MCF 10A (cell line): ENCODE measurements at regions of chr1 and their contacts with region 1.

Region 1: DNA sequence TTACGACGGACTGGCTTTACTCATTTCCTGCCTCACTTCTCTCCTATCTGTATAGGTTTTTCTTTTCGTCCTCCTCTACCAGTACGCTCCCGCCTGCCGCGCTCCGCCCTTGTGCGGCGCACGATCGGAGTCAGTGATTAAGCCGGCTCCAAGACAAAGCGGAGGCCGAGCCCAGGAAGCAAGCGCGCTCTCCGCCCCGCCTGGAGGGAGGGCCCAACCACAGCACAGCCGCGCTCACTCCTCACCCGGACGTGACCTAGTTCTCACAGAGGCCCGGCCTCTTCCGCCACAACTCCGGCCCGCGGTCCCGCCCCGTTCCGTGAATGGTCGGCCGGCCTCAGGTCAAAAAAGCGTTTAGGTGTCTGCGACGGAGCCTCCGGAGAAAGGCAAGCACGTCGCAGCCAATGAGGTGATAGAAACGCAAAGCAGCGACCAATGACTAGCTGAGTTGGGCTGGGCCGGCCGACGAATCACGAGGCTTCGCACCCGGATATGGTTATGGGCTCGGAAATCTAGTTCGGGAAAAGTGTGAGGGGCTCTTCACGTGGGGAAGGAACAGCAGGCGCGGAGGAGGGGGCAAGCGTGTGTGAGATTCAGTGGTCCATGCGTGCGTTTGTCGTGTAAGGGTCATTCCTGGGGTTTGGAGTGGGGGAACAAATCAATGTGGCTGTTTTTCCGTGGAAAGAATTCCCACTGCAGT is at the start of gene METTL13:
- DNase-seq: peak; percentile 100
- H3K4me3 Mint-ChIP-seq: peak within 1 kb of the TSS; percentile 84
- H3K27ac Mint-ChIP-seq: peak within 1 kb of the TSS; percentile 95
- H3K4me1 Mint-ChIP-seq: peaks cover 28% of the 10 kb centered on the region
- H3K27me3 Mint-ChIP-seq: no peaks in the 10 kb centered on the region
- CTCF ChIP-seq: no peak
- total RNA-seq, gene METTL13: 30.7 and 39.1 TPM in 2 replicates

Region 2: DNA sequence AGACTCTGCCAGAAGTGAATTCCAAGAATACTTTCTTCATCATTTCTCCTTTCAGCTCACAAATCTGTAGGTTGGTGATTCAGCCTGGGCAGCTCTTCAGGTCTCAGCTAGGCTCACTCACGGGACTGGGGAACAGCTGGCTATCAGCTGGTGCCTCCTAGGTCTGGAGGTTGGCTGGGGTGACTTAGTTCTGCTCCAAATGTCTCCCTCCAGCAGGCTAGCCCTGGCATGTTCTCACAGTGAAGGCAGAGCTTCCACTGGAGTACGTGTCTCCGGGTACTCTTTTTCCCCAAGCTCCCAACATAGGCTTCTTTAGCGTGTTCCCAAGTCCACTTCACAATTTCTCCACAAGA is 27.0 kb before region 1 on chr1:
- CTCF ChIA-PET with region 1: interaction called, 4 read pairs
- POLR2A ChIA-PET with region 1: interaction called, 29 read pairs
- intact Hi-C with region 1: no loop called
- DNase-seq: peak; percentile 7
- H3K4me3 Mint-ChIP-seq: no peak overlapping the region
- H3K27ac Mint-ChIP-seq: peak overlapping the region; percentile 80
- H3K4me1 Mint-ChIP-seq: peaks cover 10% of the 10 kb centered on the region
- H3K27me3 Mint-ChIP-seq: no peaks in the 10 kb centered on the region
- CTCF ChIP-seq: no peak

Region 3: GRCh38 chr1:171769171-171769570 is 12.2 kb before region 1 on chr1:
- CTCF ChIA-PET with region 1: interaction called, 4 read pairs
- POLR2A ChIA-PET with region 1: interaction called, 31 read pairs
- intact Hi-C with region 1: no loop called
- DNase-seq: no peak
- H3K4me3 Mint-ChIP-seq: no peak overlapping the region
- H3K27ac Mint-ChIP-seq: no peak overlapping the region
- H3K4me1 Mint-ChIP-seq: no peaks in the 10 kb centered on the region
- H3K27me3 Mint-ChIP-seq: peaks cover 17% of the 10 kb centered on the region
- CTCF ChIP-seq: no peak

Region 4: DNA sequence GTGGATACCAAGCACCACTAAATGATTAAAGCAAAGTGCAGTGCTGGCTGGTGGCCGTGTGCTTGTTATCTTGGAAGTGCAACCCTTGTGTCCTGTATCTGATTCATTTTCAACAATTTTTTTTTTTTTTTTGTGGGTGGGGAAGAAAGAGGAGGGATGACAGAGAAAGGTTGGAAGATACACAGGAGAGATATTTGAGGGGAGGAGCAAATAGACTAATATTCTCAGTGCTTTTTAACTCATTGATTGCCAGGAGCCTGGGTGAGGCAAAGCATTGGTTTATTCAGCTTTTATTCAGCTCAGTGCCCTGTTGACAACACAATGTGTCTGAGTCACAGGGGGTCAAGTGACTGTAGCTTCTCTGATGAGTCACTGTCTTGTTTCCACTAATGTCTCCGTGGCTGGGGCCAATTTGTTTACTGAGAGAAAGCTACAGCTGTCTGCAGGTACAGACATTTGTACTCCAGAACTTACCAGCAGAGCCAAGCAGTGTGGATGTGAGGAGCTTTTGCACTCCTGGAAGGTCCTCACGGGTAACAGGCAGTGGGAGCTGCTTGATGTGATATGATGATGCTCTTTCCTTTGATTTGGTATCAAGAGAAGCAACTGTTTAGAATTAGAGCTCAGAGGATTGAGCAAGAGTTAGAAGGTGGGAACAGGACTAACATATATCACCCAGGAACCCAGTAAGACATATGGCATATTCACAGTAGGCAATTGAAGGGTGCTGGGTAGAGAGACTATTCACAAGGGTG is 36.4 kb after region 1 on chr1:
- CTCF ChIA-PET with region 1: no interaction called
- POLR2A ChIA-PET with region 1: interaction called, 10 read pairs
- intact Hi-C with region 1: no loop called
- DNase-seq: peak; percentile 94
- H3K4me3 Mint-ChIP-seq: peak overlapping the region; percentile 3
- H3K27ac Mint-ChIP-seq: peak overlapping the region; percentile 90
- H3K4me1 Mint-ChIP-seq: peaks cover 23% of the 10 kb centered on the region
- H3K27me3 Mint-ChIP-seq: no peaks in the 10 kb centered on the region
- CTCF ChIP-seq: no peak